PC-9 (cell line): ENCODE measurements at regions of chr1 and their contacts with region 1.

Region 1: DNA sequence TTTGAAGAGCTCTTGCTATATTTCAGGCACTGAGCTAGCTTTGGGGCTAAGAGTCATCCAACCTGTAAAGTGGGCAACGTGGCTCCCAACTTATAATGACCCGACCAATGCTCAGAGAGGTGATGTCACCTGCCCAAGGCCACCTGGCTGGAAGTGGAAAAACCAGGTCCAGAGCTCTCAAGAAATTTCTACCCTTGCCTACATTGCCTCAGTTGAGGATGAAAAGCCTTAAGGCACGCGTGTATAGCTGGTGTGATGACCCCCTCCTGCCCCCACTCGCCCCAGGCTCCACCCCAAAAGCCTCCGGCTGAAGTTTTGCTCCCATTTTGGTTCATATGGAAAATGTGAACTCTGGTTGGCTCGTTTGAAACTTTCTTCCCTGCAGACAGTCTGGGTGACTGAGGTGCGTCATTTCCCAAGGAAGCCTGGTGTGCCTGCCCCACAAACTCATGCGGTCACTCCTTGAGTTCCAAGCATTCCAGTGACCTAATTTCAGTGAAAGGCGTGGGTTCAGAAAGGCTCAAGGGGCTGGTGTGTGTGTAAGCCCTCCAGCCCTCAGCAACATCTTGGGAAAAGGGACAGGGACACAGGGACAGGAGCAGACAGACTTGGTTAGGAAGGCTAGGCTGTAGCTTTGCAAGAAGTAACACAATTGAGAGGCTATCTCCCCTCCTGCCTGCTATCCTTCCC is 20.5 kb downstream of the HTR1D start:
- DNase-seq: peak; percentile 84 to 95
- H3K4me3 ChIP-seq: peak overlapping the region; percentile 40; the same call in 1 of the 2 replicates
- H3K27ac ChIP-seq: peak overlapping the region; percentile 100
- H3K4me1 ChIP-seq: peaks cover 46% of the 10 kb centered on the region
- H3K27me3 ChIP-seq: no peaks in the 10 kb centered on the region
- CTCF ChIP-seq: no peak

Region 2: GRCh38 chr1:23019094-23019862 is 177.5 kb before region 1 on chr1 and contains the start of gene KDM1A:
- CTCF ChIA-PET with region 1: no interaction called
- POLR2A ChIA-PET with region 1: interaction called, 27 read pairs
- intact Hi-C with region 1: no loop called
- DNase-seq: peak; percentile 88 to 97
- H3K4me3 ChIP-seq: peak within 1 kb of the TSS; percentile 86
- H3K27ac ChIP-seq: peak within 1 kb of the TSS; percentile 88
- H3K4me1 ChIP-seq: peaks cover 31% of the 10 kb centered on the region
- H3K27me3 ChIP-seq: no peaks in the 10 kb centered on the region
- CTCF ChIP-seq: no peak
- total RNA-seq, gene KDM1A: 185 and 213 TPM in 2 replicates

Region 3: DNA sequence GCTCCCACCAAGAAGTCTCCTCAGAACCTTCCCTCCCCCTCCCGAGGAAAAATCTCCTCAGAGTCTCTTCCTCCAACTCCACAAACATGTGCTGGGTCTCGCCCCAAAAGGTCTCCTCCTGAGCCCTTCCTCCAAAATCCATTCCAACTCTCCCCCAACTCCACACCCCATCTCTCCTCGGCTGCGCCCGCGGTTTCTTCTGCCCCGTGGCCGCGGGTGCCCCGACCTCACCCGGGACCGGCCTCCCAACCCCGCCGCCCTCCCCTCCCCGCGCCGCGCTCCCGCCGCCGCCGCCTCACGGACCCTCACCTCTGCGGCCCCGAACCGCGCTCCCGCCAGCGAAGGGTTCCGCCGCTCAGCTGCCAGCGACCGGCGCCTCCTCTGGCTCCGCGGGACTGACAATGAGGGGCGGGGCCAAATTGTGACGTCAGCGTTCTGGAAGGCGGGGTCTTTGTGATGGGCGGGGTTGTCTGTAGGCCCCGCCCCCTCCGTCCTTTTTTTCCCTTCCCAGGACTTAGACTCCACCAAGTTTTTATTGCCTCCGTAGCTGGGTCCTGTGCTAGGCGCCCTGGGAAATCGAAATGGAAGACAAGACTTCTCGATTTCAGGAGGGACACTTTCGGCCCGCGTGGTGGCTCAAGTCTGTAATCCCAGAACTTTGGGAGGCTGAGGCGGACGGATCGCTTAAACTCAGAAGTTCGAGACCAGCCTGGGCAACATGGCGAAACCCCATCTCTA is 28.2 kb before region 1 on chr1 and contains the start of gene LUZP1:
- CTCF ChIA-PET with region 1: interaction called, 6 read pairs
- POLR2A ChIA-PET with region 1: no interaction called
- intact Hi-C with region 1: loop called (anchors 1 kb)
- DNase-seq: peak; percentile 39 to 80
- H3K4me3 ChIP-seq: peak within 1 kb of the TSS; percentile 75
- H3K27ac ChIP-seq: peak within 1 kb of the TSS; percentile 58
- H3K4me1 ChIP-seq: peaks cover 6% of the 10 kb centered on the region
- H3K27me3 ChIP-seq: no peaks in the 10 kb centered on the region
- CTCF ChIP-seq: no peak
- total RNA-seq, gene LUZP1: 35.0 and 37.6 TPM in 2 replicates

Region 4: DNA sequence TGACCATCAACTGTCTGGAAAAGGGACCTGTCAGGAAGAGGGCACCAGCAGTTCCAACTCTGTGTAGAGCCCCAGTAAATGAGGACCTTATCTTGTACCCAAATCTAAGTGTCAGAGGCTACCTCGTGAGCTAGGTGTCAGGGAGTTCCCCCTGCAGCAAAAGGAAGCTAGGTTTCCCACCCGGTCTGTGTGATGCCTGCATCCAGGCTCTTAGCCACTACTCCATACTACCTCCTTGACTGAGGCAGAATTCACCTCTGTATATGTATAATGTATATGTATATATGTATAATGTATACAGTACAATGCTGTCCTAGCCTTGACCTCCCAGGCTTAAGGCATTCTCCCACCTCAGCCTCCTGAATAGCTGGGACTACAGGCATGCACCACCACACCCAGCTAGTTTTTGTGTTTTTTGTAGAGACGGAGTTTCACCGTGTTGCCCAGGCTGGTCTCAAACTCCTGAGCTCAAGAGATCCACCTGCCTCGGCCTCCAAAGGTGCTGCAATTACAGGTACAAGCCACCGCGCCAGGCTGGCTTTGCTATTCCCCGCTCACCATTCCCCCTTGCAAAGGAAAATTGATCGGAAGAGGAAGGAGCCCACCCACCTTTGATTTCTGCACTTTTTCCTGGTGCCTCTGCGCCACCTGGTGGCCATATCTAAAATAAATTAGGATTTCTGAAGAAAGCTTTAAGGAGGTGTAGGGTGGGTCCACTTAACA is 12.4 kb before region 1 on chr1:
- CTCF ChIA-PET with region 1: interaction called, 3 read pairs
- POLR2A ChIA-PET with region 1: interaction called, 5 read pairs
- intact Hi-C with region 1: loop called (anchors 1 kb)
- DNase-seq: no peak
- H3K4me3 ChIP-seq: no peak overlapping the region
- H3K27ac ChIP-seq: no peak overlapping the region
- H3K4me1 ChIP-seq: peaks cover 20% of the 10 kb centered on the region
- H3K27me3 ChIP-seq: no peaks in the 10 kb centered on the region
- CTCF ChIP-seq: peak; percentile 91

Region 5: GRCh38 chr1:23216771-23217420 is 20.1 kb after region 1 on chr1:
- CTCF ChIA-PET with region 1: interaction called, 15 read pairs
- POLR2A ChIA-PET with region 1: no interaction called
- intact Hi-C with region 1: no loop called
- DNase-seq: peak in 1 of 2 experiments; percentile 50
- H3K4me3 ChIP-seq: peak overlapping the region; percentile 66
- H3K27ac ChIP-seq: no peak overlapping the region
- H3K4me1 ChIP-seq: peaks cover 22% of the 10 kb centered on the region; the same call in 1 of the 2 replicates
- H3K27me3 ChIP-seq: no peaks in the 10 kb centered on the region
- CTCF ChIP-seq: peak; percentile 79

Region 6: DNA sequence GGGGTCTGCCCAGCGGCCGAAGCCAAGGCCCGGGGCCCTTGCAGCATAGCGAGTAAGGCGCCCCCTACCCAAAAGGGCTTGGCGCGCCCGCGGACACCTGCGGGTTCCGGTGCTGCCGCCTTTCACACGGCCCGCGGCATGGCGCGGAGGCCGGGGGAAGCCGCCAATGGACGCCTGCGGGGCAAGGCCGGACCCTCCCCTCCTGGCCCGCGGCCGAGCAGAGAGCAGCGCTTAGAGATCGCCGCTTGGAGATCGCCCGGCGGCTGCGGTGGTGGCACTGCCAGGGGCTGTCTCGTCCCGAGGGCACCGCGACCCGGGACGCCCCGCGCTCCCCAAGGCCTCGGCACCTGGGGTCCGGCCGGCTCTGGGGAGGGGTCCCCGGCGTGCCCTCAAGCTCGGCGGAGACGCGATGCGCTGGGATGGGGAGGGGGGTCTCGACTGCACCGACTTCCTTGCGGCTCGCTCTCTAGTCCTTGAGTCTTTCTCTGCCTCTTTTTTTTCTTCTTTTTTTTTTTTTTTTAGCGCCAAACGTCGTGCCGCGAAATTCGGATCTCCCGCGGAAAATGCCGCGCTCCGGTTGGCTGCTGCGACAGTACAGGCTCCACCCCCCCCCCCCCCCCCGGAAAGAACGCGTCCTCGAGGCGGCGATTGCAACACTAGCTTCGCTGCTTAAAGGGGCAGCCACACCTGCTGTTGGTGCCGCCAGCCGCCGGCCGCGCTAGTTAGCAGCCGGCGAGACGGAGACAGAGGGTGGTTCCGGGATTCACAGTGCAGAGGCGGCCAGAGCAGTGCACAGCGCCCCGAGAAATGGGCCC is 334.2 kb after region 1 on chr1 and contains the start of gene E2F2:
- CTCF ChIA-PET with region 1: no interaction called
- POLR2A ChIA-PET with region 1: no interaction called
- intact Hi-C with region 1: loop called (anchors 2 kb)
- DNase-seq: peak; percentile 70 to 73
- H3K4me3 ChIP-seq: peak within 1 kb of the TSS; percentile 65
- H3K27ac ChIP-seq: peak within 1 kb of the TSS; percentile 12; the same call in 1 of the 2 replicates
- H3K4me1 ChIP-seq: peaks cover 70% of the 10 kb centered on the region
- H3K27me3 ChIP-seq: no peaks in the 10 kb centered on the region
- CTCF ChIP-seq: no peak; the same call in 1 of the 2 replicates
- total RNA-seq, gene E2F2: 7.6 and 9.0 TPM in 2 replicates

Region 7: DNA sequence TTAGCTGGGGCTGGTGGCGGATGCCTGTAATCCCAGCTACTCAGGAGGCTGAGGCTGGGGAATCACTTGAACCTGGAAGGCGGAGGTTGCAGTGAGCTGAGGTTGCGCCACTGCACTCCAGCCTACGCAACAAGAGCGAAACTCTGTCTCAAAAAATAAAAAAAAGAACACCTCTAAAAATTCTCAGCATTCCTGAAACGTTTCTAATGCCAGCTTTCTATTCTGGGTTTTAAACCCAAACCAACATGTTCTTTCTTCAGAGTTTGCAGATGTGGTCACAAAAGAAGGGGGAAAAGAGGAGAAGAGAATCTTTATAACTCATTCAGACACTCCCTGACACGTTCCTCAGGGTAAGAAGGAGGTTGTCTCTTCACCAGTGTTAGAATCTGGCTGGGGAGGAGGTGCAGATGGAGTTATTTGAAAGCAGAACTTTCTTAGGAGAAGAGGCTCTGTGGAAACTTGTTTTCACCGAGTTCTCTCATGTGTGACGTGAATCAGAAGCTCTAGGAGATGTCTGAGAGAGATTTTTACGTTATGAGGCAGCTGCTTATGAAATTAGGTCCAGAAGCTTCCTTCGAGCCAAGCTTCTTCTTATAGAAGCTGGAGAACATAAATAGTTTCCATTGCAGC is 734.2 kb after region 1 on chr1:
- CTCF ChIA-PET with region 1: no interaction called
- POLR2A ChIA-PET with region 1: interaction called, 10 read pairs
- intact Hi-C with region 1: no loop called
- DNase-seq: no peak
- H3K4me3 ChIP-seq: no peak overlapping the region
- H3K27ac ChIP-seq: no peak overlapping the region
- H3K4me1 ChIP-seq: no peaks in the 10 kb centered on the region
- H3K27me3 ChIP-seq: no peaks in the 10 kb centered on the region
- CTCF ChIP-seq: no peak